ENCODE measurements at regions of chr20 and their contacts with region 1.

Region 1: DNA sequence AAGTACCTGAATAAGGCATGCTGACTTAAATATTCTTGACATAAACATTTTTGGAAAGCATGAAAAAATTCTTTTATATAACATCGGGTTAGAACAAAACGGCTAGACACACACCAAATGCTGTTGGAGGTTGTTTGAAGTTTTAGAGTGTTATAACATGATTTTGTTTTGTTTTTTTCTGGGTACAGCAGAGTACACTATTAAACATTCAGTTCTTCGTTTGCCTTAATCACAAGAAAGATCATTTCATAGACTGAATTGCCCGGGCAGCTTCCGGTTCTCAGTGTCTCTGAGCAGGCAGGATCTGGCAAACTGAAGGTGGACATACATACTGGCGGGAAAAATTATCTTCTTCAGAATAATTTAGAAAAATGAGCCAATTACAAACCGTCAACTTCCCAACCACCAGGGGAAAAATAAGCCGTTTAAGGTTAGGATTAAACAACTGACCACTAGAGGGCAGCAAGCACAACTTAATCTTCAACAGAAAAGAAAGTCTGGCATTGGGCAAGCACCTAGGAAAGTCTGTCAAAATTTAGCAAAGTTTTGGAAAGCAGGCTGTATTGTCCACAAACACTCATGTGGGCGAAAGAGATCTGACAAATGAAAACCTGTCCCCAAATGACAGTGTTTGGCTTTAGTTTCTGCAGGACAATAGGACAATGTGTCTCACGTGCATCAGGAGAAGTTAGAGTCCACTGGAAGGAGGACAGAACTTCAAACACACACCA is 15.0 kb downstream of the ZNF217 start:
- DNase-seq: peak; percentile 48
- H3K4me3 Mint-ChIP-seq: peak overlapping the region; percentile 82
- H3K27ac Mint-ChIP-seq: peak overlapping the region; percentile 97
- H3K4me1 Mint-ChIP-seq: peaks cover 85% of the 10 kb centered on the region
- H3K27me3 Mint-ChIP-seq: no peaks in the 10 kb centered on the region

Region 2: DNA sequence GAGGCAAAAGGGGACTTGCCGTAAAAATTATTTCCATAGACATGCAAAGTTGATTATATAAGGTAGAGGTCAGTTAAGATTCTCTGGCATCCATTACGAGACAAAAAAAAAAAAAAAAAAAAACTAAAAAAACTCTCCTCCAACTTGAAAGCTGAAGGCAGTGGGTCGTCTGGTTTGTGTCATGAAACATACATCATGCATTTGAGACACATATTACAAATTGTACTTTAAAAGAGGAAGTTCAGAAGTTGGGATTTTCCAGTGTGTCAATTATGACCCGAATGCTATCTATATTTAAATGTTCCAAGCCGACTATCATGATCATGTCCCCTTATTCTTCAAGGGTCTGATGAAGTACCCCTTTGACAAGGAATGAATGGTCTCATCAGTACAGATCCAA is 110.1 kb before region 1 on chr20:
- CTCF ChIA-PET with region 1: no interaction called
- POLR2A ChIA-PET with region 1: no interaction called
- intact Hi-C with region 1: no loop called
- DNase-seq: no peak
- H3K4me3 Mint-ChIP-seq: no peak overlapping the region
- H3K27ac Mint-ChIP-seq: no peak overlapping the region
- H3K4me1 Mint-ChIP-seq: no peaks in the 10 kb centered on the region
- H3K27me3 Mint-ChIP-seq: peaks cover 3% of the 10 kb centered on the region

Region 3: GRCh38 chr20:53611449-53611894 is 32.8 kb after region 1 on chr20:
- CTCF ChIA-PET with region 1: interaction called, 4 read pairs
- POLR2A ChIA-PET with region 1: interaction called, 3 read pairs
- intact Hi-C with region 1: loop called (anchors 2 kb)
- DNase-seq: no peak
- H3K4me3 Mint-ChIP-seq: no peak overlapping the region
- H3K27ac Mint-ChIP-seq: no peak overlapping the region
- H3K4me1 Mint-ChIP-seq: peaks cover 32% of the 10 kb centered on the region
- H3K27me3 Mint-ChIP-seq: no peaks in the 10 kb centered on the region

Region 4: GRCh38 chr20:53660078-53660909 is 81.6 kb after region 1 on chr20:
- CTCF ChIA-PET with region 1: no interaction called
- POLR2A ChIA-PET with region 1: interaction called, 3 read pairs
- intact Hi-C with region 1: loop called (anchors 1 kb)
- DNase-seq: peak; percentile 58
- H3K4me3 Mint-ChIP-seq: peak overlapping the region; percentile 78
- H3K27ac Mint-ChIP-seq: peak overlapping the region; percentile 83
- H3K4me1 Mint-ChIP-seq: peaks cover 55% of the 10 kb centered on the region
- H3K27me3 Mint-ChIP-seq: no peaks in the 10 kb centered on the region

Region 5: DNA sequence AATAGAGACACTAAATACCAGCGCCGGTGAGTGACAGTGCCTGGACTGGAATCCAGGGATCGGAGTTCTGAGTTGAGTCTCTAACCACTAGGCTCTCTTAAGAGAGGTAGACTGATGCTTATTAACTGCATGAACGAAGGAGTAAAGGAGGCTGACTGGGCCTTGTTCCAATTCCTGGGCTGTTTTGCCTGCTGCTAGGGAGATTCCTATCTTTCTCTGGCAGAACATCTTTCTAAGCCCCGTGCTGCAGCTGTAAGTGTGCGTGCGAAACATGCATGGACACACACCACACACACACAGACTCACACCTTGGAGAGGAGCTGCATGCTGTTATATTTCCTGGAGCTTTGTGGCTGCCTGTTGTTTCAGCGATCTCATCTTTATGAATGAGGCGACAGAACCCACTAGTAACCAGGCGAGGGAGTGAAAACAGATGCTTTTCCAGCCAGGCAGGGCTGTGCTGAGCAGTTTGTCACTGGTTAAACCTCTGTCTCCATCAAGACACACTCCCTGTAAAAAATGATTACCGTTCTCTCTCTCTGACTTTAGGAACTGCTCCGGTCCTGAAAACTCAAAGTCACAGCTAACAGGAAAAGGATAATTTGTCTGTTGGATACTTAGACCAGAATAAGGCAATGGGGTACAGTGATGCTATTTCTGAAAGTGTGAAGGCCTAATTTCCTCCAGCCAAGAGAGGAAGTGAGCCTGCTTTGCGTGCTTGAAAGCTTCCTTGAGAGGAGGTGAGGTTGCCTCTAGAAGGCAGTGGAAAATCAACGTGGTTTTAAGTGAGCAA is 172.4 kb after region 1 on chr20:
- CTCF ChIA-PET with region 1: interaction called, 5 read pairs
- POLR2A ChIA-PET with region 1: interaction called, 4 read pairs
- intact Hi-C with region 1: loop called (anchors 2 kb)
- DNase-seq: peak; percentile 53
- H3K4me3 Mint-ChIP-seq: peak overlapping the region; percentile 45
- H3K27ac Mint-ChIP-seq: peak overlapping the region; percentile 95
- H3K4me1 Mint-ChIP-seq: peaks cover 60% of the 10 kb centered on the region
- H3K27me3 Mint-ChIP-seq: no peaks in the 10 kb centered on the region

Region 6: DNA sequence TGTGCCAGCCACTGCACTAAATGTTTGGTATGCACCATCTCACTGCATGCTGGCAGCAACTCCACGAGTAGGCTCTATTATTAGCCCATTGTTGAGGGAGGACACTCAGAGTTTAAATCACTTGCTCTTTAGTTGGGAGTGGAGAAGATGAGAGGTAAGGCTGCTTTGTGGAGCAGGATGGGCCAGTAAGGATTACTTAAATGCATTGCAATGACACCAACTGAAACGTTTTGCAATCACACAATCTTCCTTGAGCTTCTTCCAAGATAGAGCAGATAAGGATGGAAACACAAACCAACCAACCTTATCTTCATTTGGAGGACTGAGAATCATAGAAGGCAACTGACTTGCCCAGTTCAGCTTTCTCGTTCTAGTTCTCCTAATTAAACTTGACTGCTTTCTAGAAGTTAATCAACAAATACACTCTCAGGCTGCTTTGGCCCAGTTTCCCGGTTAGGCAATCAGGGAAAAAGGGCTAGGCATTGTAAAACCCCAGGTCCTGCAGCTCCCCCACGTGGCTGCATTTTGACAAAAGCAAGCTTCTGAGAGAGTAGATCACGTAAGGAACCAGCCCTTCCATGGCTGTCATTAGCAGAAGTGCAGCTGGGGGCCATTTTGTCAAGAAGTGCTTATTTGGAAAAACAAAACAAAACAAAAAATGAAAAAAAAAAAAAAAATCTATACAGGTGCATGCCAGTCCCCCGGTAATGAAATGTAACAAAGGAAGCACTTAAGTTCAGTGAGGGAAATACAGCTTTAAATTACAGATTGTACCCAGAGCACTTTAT is 361.1 kb after region 1 on chr20:
- CTCF ChIA-PET with region 1: interaction called, 59 read pairs
- POLR2A ChIA-PET with region 1: interaction called, 7 read pairs
- intact Hi-C with region 1: loop called (anchors 2 kb)
- DNase-seq: peak; percentile 87
- H3K4me3 Mint-ChIP-seq: no peak overlapping the region
- H3K27ac Mint-ChIP-seq: no peak overlapping the region
- H3K4me1 Mint-ChIP-seq: peaks cover 28% of the 10 kb centered on the region
- H3K27me3 Mint-ChIP-seq: no peaks in the 10 kb centered on the region

Measured in activated CD4-positive, alpha-beta memory T cell treated with anti-CD3 and anti-CD28 coated beads for 36 hours (primary cell).